Activated CD4-positive, alpha-beta T cell treated with anti-CD3 and anti-CD28 coated beads for 36 hours (primary cell): ENCODE measurements at regions of chr2 and their contacts with region 1.

Region 1: DNA sequence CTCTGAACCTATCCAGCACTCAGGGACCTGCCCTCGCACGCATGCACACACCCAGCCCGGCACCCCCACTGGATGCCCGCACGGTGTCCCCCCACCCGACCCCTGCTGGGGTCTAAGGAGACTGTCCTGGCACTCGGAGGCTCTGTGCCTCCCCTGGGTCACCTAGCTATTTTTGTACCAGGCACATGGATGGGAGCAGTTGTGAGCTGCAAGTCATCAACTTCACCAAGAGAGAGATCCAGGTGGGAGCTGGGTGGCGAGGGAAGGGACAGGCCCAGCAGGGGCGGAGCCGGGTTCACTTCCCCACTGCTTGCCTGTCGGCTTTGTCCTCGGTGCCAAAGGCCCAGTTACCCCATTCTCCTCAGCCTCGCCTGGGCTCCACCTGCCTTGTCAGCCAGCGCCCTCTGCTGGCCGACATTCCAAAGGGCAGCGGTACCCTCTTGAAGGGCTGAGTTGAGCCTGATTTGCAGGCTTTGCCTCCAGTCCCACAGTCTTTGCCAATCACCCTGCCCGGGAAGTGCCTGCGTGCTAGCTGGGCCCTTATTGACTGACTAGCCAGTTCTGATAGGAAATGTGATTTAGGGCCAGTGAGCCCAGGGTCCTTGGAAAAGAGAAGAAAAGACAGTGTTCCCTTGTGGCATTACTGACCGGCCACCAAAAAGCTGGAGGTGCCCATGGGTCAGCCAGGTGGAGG is 5.8 kb downstream of the NT5DC4 start:
- DNase-seq: peak; percentile 94
- ATAC-seq: peak; percentile 98
- H3K4me3 Mint-ChIP-seq: no peak overlapping the region
- H3K27ac Mint-ChIP-seq: no peak overlapping the region
- H3K4me1 Mint-ChIP-seq: peaks cover 3% of the 10 kb centered on the region
- H3K27me3 Mint-ChIP-seq: no peaks in the 10 kb centered on the region

Region 2: DNA sequence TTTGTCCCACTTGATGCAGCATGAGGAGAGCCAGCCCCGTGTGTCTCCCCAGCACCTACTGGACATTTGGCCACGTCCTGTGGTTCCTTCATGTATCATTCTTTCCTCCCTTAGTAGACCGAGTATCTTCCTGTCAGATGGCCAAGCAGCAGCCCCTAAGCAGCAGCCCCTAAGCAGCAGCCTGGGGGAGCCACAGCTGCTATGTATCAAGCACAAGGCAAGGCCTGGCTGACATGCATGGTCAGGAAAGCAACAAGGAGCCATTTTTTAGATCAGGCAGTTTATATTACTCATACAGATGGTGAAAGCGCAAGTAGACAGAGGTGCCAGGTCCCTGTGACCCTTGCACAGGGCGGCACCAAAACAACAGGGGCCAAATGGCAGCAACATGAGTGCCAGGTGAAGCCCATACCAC is 120.1 kb before region 1 on chr2:
- CTCF ChIA-PET with region 1: interaction called, 133 read pairs
- POLR2A ChIA-PET with region 1: no interaction called
- intact Hi-C with region 1: no loop called
- DNase-seq: no peak
- ATAC-seq: no peak
- H3K4me3 Mint-ChIP-seq: no peak overlapping the region
- H3K27ac Mint-ChIP-seq: no peak overlapping the region
- H3K4me1 Mint-ChIP-seq: no peaks in the 10 kb centered on the region
- H3K27me3 Mint-ChIP-seq: no peaks in the 10 kb centered on the region

Region 3: DNA sequence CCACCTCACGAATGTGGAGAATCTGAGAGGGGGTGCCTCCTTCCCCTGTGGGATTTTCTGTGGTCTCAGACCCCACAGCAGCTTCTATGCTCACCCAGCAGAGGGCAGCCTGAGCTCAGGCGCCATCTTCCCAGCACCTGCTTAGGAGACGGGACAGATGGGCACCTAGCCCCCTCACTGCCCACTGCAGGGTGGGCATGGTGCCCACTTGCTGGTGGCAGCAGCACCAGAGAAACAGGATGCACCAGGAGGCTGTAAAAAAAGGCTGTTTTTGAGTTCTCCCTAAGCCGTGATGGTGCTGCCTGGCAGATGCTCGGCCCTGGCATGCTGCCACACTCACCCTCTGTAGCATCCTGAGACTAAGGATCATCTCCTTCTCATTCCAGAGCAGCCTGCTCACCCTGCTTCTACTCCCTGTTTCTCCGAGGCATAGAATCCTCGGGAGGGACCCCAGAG is 100.0 kb before region 1 on chr2:
- CTCF ChIA-PET with region 1: interaction called, 185 read pairs
- POLR2A ChIA-PET with region 1: no interaction called
- intact Hi-C with region 1: loop called (anchors 1 kb)
- DNase-seq: peak; percentile 81
- ATAC-seq: peak; percentile 53
- H3K4me3 Mint-ChIP-seq: peak overlapping the region; percentile 50
- H3K27ac Mint-ChIP-seq: peak overlapping the region; percentile 82
- H3K4me1 Mint-ChIP-seq: peaks cover 65% of the 10 kb centered on the region
- H3K27me3 Mint-ChIP-seq: peaks cover 2% of the 10 kb centered on the region

Region 4: DNA sequence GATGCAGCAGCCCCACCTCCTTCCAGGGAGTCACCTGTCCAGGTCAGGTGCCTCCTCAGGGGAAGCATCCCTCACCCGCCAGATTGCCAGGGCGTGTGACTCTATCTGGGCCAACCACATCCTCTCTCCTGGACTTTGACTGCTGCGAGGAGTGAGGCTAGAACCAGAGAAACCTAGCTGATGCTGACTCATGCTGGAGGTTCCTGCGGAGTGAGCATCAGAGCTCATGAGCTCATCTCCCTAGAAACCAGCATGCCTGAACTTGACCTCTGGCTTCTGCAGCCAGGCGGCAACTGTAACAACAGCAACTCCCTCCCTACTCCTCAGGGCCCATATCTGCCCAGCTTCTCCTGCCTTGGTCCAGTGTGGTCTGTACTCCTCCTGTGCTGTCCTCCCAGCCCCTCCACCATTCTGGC is 34.1 kb before region 1 on chr2:
- CTCF ChIA-PET with region 1: interaction called, 20 read pairs
- POLR2A ChIA-PET with region 1: no interaction called
- intact Hi-C with region 1: loop called (anchors 1 to 2 kb)
- DNase-seq: peak; percentile 81
- ATAC-seq: peak; percentile 92
- H3K4me3 Mint-ChIP-seq: peak overlapping the region; percentile 7
- H3K27ac Mint-ChIP-seq: peak overlapping the region; percentile 87
- H3K4me1 Mint-ChIP-seq: peaks cover 33% of the 10 kb centered on the region
- H3K27me3 Mint-ChIP-seq: no peaks in the 10 kb centered on the region

Region 5: DNA sequence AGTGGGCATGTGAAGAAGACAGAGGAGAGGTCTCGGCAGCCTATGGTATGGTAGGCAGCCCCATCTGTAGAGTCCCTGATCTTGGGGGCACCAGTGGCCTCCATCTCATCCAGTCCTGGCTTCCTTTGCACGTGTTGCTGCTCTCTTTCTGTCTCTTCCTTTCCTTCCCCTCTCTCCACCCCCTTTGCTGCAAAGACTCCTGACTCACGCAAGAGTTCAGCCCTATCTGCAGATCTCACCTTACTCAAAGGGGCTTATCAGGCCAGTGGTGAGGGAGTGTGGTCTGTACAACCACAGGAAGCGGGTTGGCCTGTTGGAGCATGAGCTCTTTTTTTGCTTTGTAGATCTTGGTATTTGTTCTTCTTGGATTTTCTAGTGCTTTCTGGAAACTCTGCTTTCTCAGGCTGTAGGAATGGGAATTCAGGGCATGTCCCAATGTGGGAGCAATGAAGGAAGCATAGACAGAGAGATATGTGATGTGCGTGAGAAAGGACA is 20.4 kb before region 1 on chr2:
- CTCF ChIA-PET with region 1: interaction called, 18 read pairs
- POLR2A ChIA-PET with region 1: no interaction called
- intact Hi-C with region 1: no loop called
- DNase-seq: peak; percentile 78
- ATAC-seq: peak; percentile 93
- H3K4me3 Mint-ChIP-seq: no peak overlapping the region
- H3K27ac Mint-ChIP-seq: no peak overlapping the region
- H3K4me1 Mint-ChIP-seq: peaks cover 31% of the 10 kb centered on the region
- H3K27me3 Mint-ChIP-seq: peaks cover 11% of the 10 kb centered on the region

Region 6: DNA sequence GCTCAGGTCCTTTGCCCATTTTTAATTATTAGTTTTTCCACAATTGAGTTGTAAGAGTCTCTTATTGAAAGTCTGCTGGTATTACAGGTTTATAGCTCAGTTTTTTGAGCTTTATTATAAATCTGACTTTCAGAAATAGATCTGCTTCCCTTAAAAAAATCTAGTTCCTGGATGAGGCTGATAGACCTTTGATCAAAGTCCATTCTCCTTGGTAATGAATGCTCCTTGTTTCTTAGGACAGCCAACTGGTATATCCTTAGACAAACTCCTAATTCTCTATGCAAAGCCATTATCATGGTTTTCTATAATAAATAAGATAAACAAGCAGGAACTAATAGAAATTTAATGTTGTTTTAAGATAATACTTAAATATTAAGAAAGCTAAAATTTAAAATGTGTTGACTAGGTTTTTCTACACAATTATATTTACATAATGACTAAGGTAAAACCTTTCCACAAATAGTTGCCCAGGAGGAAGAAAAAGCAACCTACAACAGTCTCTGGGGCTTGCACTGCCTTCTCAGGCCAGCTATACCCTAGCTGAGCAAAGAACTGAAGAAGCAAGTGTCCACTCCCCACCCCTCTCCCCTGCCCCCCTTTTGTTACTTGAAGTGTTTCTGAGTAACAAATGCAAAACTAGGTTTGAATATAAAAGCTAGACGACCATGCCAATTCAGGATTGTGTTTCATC is 11.0 kb after region 1 on chr2:
- CTCF ChIA-PET with region 1: interaction called, 17 read pairs
- POLR2A ChIA-PET with region 1: no interaction called
- intact Hi-C with region 1: no loop called
- DNase-seq: no peak
- ATAC-seq: no peak
- H3K4me3 Mint-ChIP-seq: no peak overlapping the region
- H3K27ac Mint-ChIP-seq: no peak overlapping the region
- H3K4me1 Mint-ChIP-seq: peaks cover 4% of the 10 kb centered on the region
- H3K27me3 Mint-ChIP-seq: no peaks in the 10 kb centered on the region

Region 7: DNA sequence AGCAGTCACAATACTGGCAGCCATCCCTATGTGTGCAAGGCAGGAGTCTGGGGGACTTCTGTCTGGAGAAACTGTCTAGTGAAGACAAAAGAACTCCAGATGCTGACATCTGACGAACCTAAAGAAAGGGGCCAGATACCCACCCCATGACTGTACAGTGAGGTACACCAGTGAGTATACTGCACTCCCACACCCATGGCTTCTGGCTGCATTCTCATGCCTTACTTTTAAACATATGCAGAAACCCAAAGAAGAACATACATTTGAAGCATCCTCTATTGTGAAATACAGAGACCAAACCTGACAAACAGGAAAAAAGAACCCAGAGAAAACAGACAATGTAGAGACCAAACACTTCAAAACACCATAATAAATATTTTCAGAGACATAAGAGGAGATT is 1265.4 kb after region 1 on chr2:
- CTCF ChIA-PET with region 1: no interaction called
- POLR2A ChIA-PET with region 1: no interaction called
- intact Hi-C with region 1: no loop called
- DNase-seq: no peak
- ATAC-seq: no peak
- H3K4me3 Mint-ChIP-seq: no peak overlapping the region
- H3K27ac Mint-ChIP-seq: no peak overlapping the region
- H3K4me1 Mint-ChIP-seq: no peaks in the 10 kb centered on the region
- H3K27me3 Mint-ChIP-seq: peaks cover 3% of the 10 kb centered on the region